ENCODE measurements at regions of chr1 and their contacts with region 1.

Region 1: GRCh38 chr1:95043141-95043980 is 29.4 kb downstream of the ALG14 start:
- DNase-seq: peak; percentile 97
- H3K4me3 ChIP-seq: no peak overlapping the region
- H3K27ac ChIP-seq: peak overlapping the region; percentile 71 to 82 (median 78)
- H3K4me1 ChIP-seq: peaks cover 16 to 32% (median 29%) of the 10 kb centered on the region in 4 donors
- H3K27me3 ChIP-seq: no peaks in the 10 kb centered on the region
- CTCF ChIP-seq: peak; percentile 99
- EP300 ChIP-seq: no peak
- POLR2A ChIP-seq: no peak

Region 2: DNA sequence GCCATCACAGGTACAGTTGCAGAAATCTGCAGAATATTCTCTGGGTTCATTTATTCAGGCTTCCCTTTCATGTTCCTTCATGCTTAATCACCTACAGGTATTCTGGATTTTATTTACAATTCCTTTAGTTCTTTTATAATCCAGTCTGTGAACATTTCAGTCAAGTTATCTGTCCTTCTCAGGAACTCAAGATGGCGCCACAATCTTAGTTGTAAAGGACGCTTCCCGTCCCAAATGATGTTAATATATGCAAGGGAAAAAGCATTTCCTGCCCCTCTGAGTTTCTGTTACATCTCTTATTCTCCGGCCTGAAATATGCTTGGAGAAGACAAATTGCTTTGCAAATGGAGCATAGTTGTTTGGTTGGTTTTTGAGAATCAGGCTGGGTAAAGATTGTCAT is 521.1 kb before region 1 on chr1:
- intact Hi-C with region 1: loop called (anchors 10 kb)
- DNase-seq: no peak
- H3K4me3 ChIP-seq: no peak overlapping the region
- H3K27ac ChIP-seq: no peak overlapping the region
- H3K4me1 ChIP-seq: peaks cover 0 to 9% (median 3%) of the 10 kb centered on the region in 4 donors
- H3K27me3 ChIP-seq: no peaks in the 10 kb centered on the region
- CTCF ChIP-seq: peak; percentile 42 to 54 (median 43)
- EP300 ChIP-seq: no peak
- POLR2A ChIP-seq: no peak

Region 3: GRCh38 chr1:94926915-94927404 is 116.4 kb before region 1 on chr1 and contains the start of gene CNN3:
- intact Hi-C with region 1: loop called (anchors 2 kb)
- DNase-seq: peak; percentile 96
- H3K4me3 ChIP-seq: peak within 1 kb of the TSS; percentile 71 to 93 (median 80)
- H3K27ac ChIP-seq: peak within 1 kb of the TSS; percentile 98 to 100 (median 99)
- H3K4me1 ChIP-seq: peaks cover 30 to 67% (median 65%) of the 10 kb centered on the region in 4 donors
- H3K27me3 ChIP-seq: no peaks in the 10 kb centered on the region
- CTCF ChIP-seq: no peak
- EP300 ChIP-seq: no peak
- POLR2A ChIP-seq: peak; percentile 94
- total RNA-seq, gene CNN3: 140 to 268 (median 194) TPM

Region 4: GRCh38 chr1:94971491-94971924 is 71.9 kb before region 1 on chr1:
- intact Hi-C with region 1: no loop called
- DNase-seq: no peak
- H3K4me3 ChIP-seq: no peak overlapping the region
- H3K27ac ChIP-seq: peak overlapping the region in 3 of 4 donors; percentile 5 to 42 (median 24)
- H3K4me1 ChIP-seq: peaks cover 0 to 24% (median 20%) of the 10 kb centered on the region in 4 donors
- H3K27me3 ChIP-seq: no peaks in the 10 kb centered on the region
- CTCF ChIP-seq: no peak
- EP300 ChIP-seq: no peak
- POLR2A ChIP-seq: no peak